ENCODE measurements at regions of chr6 and their contacts with region 1.

Region 1: GRCh38 chr6:87723170-87724078 is 21.4 kb upstream of the AKIRIN2 start:
- DNase-seq: peak; percentile 65
- H3K4me3 ChIP-seq: no peak overlapping the region
- H3K27ac ChIP-seq: peak overlapping the region; percentile 77
- H3K4me1 ChIP-seq: peaks cover 28% of the 10 kb centered on the region
- H3K27me3 ChIP-seq: no peaks in the 10 kb centered on the region
- CTCF ChIP-seq: no peak

Region 2: GRCh38 chr6:87472525-87473418 is 250.7 kb before region 1 on chr6 and contains the start of gene SLC35A1:
- intact Hi-C with region 1: loop called (anchors 10 kb)
- DNase-seq: peak; percentile 87
- H3K4me3 ChIP-seq: peak within 1 kb of the TSS; percentile 93
- H3K27ac ChIP-seq: peak within 1 kb of the TSS; percentile 97
- H3K4me1 ChIP-seq: peaks cover 29% of the 10 kb centered on the region
- H3K27me3 ChIP-seq: no peaks in the 10 kb centered on the region
- CTCF ChIP-seq: peak; percentile 54
- total RNA-seq, gene SLC35A1: 11.6 TPM

Region 3: DNA sequence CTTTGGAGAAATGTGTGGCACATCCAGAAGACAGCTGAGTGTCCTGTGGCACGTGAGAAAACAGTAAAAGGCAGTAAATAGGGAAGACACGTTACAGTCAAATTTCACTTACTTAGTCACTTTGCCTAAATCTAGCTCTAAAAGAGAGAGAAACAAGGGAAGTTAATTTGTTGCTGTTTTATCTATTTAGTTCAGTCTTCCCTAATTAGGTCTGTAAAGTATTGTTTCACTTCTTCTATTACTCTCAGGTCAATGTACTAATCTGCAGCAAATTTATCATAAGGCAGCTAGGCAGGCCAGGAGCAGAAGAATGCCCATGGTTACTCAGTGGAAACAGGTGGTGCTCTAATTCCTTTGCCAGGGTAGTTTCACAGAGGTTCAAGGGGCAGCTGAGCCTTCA is 567.0 kb after region 1 on chr6:
- intact Hi-C with region 1: no loop called
- DNase-seq: no peak
- H3K4me3 ChIP-seq: no peak overlapping the region
- H3K27ac ChIP-seq: no peak overlapping the region
- H3K4me1 ChIP-seq: no peaks in the 10 kb centered on the region
- H3K27me3 ChIP-seq: no peaks in the 10 kb centered on the region
- CTCF ChIP-seq: no peak

Region 4: DNA sequence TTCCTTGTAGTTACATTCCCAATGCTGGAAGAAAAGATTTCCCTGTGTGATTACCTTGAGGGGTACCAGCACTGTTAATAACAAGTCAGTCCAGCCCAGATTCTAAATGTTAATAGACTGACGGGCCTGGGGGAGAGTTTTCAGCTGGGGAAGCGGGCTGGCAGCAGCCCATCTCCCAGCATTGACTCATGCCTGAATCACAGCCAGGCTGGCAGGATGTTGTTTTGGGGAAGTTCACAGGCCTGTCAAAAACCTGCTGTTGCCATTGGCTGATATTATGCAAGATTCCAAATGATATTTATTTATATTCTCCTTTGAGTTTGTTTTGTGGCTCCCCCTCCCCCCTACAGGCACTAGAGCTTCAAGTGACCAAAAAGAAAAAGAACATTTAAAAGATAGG is 656.7 kb after region 1 on chr6:
- intact Hi-C with region 1: no loop called
- DNase-seq: peak; percentile 41
- H3K4me3 ChIP-seq: no peak overlapping the region
- H3K27ac ChIP-seq: no peak overlapping the region
- H3K4me1 ChIP-seq: no peaks in the 10 kb centered on the region
- H3K27me3 ChIP-seq: no peaks in the 10 kb centered on the region
- CTCF ChIP-seq: no peak